ENCODE measurements at regions of chr1 and their contacts with region 1.

Region 1: DNA sequence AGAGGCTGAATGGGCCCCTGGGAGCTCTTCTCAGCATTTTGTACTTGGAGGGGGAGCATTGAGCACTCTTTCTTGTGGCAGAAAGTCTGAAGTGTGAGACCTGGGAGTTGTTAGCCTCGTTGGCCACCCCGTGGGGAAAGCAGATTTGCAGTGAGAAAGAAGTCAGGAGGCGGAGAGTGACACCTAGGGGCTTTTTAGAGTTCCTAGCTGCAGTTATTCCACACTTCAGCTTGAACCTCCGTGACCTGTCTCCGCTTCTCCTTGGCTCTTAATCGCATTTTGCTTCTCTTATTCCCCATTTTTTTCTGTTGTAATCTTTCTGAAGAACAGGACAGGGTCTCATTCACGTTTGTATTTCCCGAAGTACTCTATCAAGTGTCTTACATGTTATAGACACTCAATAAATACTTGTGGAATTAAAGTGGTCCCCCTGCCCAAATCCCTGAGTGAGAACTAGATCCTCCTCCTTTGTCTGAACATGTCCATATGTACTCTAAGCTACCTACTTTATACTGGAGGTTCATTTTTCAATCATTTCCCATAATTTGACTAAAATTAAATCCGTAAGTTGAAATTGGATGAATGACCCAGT is 14.5 kb upstream of the C1orf141 start:
- DNase-seq: peak; percentile 35 to 83
- ATAC-seq: peak; percentile 81 to 93 (median 91)
- H3K4me3 ChIP-seq: no peak overlapping the region
- H3K4me3 Mint-ChIP-seq: no peak overlapping the region
- H3K27ac ChIP-seq: no peak overlapping the region
- H3K27ac Mint-ChIP-seq: peak overlapping the region in 1 of 2 donors; percentile 55
- H3K4me1 ChIP-seq: peaks cover 9% of the 10 kb centered on the region
- H3K4me1 Mint-ChIP-seq: peaks cover 24 to 25% of the 10 kb centered on the region in 2 donors
- H3K27me3 ChIP-seq: no peaks in the 10 kb centered on the region
- H3K27me3 Mint-ChIP-seq: peaks cover 22 to 25% of the 10 kb centered on the region in 2 donors
- CTCF ChIP-seq: peak; percentile 62

Region 2: DNA sequence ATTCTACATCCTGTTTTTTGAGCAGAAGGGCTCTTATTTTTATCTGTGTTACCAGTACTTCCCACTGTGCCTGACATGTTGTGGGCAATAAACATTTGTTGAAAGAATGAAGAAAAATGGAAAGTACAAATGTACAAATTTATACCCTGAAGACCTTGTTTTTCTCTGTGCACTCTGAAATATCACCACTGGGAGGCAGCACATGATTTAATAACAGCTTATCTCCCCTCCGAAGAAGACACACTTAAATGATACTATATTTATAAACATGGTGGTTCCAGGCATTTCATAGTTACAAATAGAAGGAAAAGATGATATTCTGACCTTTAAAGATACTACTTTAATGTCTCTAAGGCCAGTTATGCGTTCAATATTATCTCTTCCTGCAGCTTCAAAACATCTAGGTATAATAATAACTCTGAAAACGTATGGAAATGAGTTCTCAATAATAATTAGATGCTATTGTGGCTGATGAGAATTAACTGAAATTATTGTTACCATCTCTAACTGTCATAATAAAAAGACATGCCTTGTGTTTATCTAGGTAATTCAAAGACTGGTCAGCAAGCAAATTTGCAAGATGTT is 384.2 kb before region 1 on chr1:
- intact Hi-C with region 1: loop called (anchors 1 kb)
- DNase-seq: peak in 1 of 2 donors; percentile 78
- ATAC-seq: peak in 2 of 3 donors; percentile 47 to 62
- H3K4me3 ChIP-seq: no peak overlapping the region
- H3K4me3 Mint-ChIP-seq: no peak overlapping the region
- H3K27ac ChIP-seq: no peak overlapping the region
- H3K27ac Mint-ChIP-seq: no peak overlapping the region
- H3K4me1 ChIP-seq: no peaks in the 10 kb centered on the region
- H3K4me1 Mint-ChIP-seq: no peaks in the 10 kb centered on the region
- H3K27me3 ChIP-seq: no peaks in the 10 kb centered on the region
- H3K27me3 Mint-ChIP-seq: peaks cover 0 to 4% of the 10 kb centered on the region in 2 donors
- CTCF ChIP-seq: peak; percentile 76

Region 3: DNA sequence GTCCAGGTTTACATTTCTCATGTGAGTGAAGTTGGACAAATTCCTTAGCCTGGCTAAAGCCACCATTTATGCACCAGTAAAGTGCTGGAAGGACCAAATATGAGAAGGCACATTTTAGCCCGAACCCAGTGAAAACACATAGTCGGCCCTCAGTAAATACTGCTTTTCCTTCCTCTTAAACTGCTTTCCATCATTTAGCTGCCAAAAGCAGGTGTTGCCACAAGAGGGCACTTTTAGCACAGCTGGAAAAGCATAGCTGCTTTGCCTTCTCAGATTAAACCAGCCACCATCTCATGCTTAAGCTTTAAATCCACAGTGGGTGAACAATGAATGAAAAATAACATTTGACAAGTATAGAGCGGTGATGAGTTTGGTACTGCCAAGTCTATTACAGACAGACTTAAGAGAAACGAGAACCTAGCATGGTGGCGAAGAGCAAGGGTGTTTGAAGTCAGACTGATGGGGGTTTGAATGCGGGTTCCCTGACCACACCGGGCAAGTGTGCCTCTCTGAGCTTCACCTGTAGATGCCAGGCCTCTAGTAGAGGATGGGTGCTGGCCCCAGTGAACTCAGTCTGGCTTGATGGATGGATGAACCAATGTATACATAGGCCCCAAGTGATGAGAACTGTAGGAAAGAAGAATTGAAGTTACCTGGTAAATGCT is 153.1 kb before region 1 on chr1:
- intact Hi-C with region 1: loop called (anchors 1 kb)
- DNase-seq: peak; percentile 23 to 78
- ATAC-seq: peak; percentile 56 to 77 (median 74)
- H3K4me3 ChIP-seq: no peak overlapping the region
- H3K4me3 Mint-ChIP-seq: no peak overlapping the region
- H3K27ac ChIP-seq: no peak overlapping the region
- H3K27ac Mint-ChIP-seq: peak overlapping the region; percentile 21 to 42
- H3K4me1 ChIP-seq: no peaks in the 10 kb centered on the region
- H3K4me1 Mint-ChIP-seq: peaks cover 6 to 14% of the 10 kb centered on the region in 2 donors
- H3K27me3 ChIP-seq: no peaks in the 10 kb centered on the region
- H3K27me3 Mint-ChIP-seq: no peaks in the 10 kb centered on the region
- CTCF ChIP-seq: peak; percentile 49

Region 4: GRCh38 chr1:67053785-67054772 is 95.2 kb before region 1 on chr1 and contains the start of gene SLC35D1:
- intact Hi-C with region 1: loop called (anchors 5 kb)
- DNase-seq: peak; percentile 67 to 85
- ATAC-seq: peak; percentile 73 to 88 (median 81)
- H3K4me3 ChIP-seq: peak within 1 kb of the TSS; percentile 86
- H3K4me3 Mint-ChIP-seq: peak within 1 kb of the TSS; percentile 93
- H3K27ac ChIP-seq: peak within 1 kb of the TSS; percentile 99
- H3K27ac Mint-ChIP-seq: peak within 1 kb of the TSS; percentile 79 to 92
- H3K4me1 ChIP-seq: peaks cover 8% of the 10 kb centered on the region
- H3K4me1 Mint-ChIP-seq: peaks cover 22 to 23% of the 10 kb centered on the region in 2 donors
- H3K27me3 ChIP-seq: no peaks in the 10 kb centered on the region
- H3K27me3 Mint-ChIP-seq: peaks cover 0 to 1% of the 10 kb centered on the region in 2 donors
- CTCF ChIP-seq: no peak
- total RNA-seq, gene SLC35D1: 12.9 to 17.0 (median 16.1) TPM

Region 5: GRCh38 chr1:67214420-67215174 is 65.3 kb after region 1 on chr1:
- intact Hi-C with region 1: loop called (anchors 1 kb)
- DNase-seq: peak; percentile 22 to 70
- ATAC-seq: peak; percentile 59 to 77 (median 71)
- H3K4me3 ChIP-seq: no peak overlapping the region
- H3K4me3 Mint-ChIP-seq: no peak overlapping the region
- H3K27ac ChIP-seq: no peak overlapping the region
- H3K27ac Mint-ChIP-seq: peak overlapping the region; percentile 14 to 60
- H3K4me1 ChIP-seq: peaks cover 11% of the 10 kb centered on the region
- H3K4me1 Mint-ChIP-seq: peaks cover 15 to 25% of the 10 kb centered on the region in 2 donors
- H3K27me3 ChIP-seq: no peaks in the 10 kb centered on the region
- H3K27me3 Mint-ChIP-seq: no peaks in the 10 kb centered on the region
- CTCF ChIP-seq: peak; percentile 84

Region 6: GRCh38 chr1:67500413-67500959 is 351.2 kb after region 1 on chr1:
- intact Hi-C with region 1: loop called (anchors 5 kb)
- DNase-seq: peak; percentile 83 to 93
- ATAC-seq: peak; percentile 99 to 100 (median 100)
- H3K4me3 ChIP-seq: no peak overlapping the region
- H3K4me3 Mint-ChIP-seq: no peak overlapping the region
- H3K27ac ChIP-seq: no peak overlapping the region
- H3K27ac Mint-ChIP-seq: peak overlapping the region in 1 of 2 donors; percentile 68
- H3K4me1 ChIP-seq: peaks cover 6% of the 10 kb centered on the region
- H3K4me1 Mint-ChIP-seq: peaks cover 0 to 15% of the 10 kb centered on the region in 2 donors
- H3K27me3 ChIP-seq: no peaks in the 10 kb centered on the region
- H3K27me3 Mint-ChIP-seq: peaks cover 0 to 2% of the 10 kb centered on the region in 2 donors
- CTCF ChIP-seq: peak; percentile 96

Measured in natural killer cell (primary cell).